ENCODE measurements at regions of chr11 and their contacts with region 1.

Region 1: DNA sequence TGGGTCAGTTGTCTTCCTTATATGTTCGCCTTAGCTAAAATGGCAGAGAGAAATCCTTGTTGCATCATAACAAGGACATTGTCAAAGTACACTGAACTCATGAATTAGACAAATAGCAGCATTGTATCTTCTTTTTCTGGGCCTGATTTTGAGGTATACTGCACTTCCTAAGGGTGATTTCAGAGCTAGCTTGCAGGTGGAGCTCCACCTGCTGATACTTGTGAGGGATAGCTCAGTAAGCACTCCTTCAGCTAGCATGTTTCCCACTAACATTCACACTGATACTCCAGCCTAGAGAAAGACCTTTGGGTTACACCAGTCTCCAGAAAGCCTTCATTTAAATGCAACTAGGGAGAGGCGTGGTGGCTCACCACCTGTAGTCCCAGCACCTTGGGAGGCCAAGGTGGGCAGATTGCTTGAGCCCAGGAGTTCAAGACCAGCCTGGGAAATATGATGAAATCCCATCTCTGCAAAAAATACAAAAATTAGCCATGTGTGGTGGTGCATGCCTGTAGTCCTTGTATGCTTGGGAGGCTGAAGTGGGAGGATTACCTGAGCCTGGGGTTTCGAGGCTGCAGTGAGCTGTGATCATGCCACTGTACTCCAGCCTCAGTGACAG is 29.8 kb downstream of the JAM3 start:
- DNase-seq: peak; percentile 26 to 56 (median 55)
- H3K4me3 ChIP-seq: no peak overlapping the region
- H3K27ac ChIP-seq: no peak overlapping the region
- H3K4me1 ChIP-seq: peaks cover 0 to 3% (median 1%) of the 10 kb centered on the region in 4 experiments
- H3K27me3 ChIP-seq: no peaks in the 10 kb centered on the region

Region 2: DNA sequence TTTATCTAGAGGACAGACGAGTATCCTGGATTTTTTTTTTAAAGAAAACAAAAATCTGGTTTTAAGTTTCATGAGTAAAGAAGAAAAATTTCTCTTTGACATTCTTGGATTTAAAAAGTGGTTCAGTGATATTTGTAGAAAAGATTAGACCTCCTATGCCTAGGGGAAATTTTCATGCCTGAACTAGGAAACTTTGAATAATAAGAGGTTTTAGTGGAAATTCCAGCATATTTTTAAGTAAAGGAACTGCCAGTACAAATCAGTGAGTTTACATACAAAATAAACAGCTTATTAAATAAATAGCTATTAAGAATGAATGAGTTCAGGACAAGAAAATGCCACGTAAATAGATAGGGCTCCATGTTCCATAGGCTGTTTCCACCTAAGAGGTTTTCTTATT is 12.3 kb before region 1 on chr11:
- CTCF ChIA-PET with region 1: interaction called, 10 read pairs
- POLR2A ChIA-PET with region 1: no interaction called
- DNase-seq: no peak
- H3K4me3 ChIP-seq: no peak overlapping the region
- H3K27ac ChIP-seq: no peak overlapping the region
- H3K4me1 ChIP-seq: no peaks in the 10 kb centered on the region
- H3K27me3 ChIP-seq: no peaks in the 10 kb centered on the region